ENCODE measurements at regions of chr12 and their contacts with region 1.

Region 1: GRCh38 chr12:48716493-48717251 is at the start of gene CCNT1:
- DNase-seq: peak; percentile 99
- H3K4me3 Mint-ChIP-seq: peak within 1 kb of the TSS; percentile 90
- H3K27ac Mint-ChIP-seq: peak within 1 kb of the TSS; percentile 93
- H3K4me1 Mint-ChIP-seq: peaks cover 43% of the 10 kb centered on the region
- H3K27me3 Mint-ChIP-seq: no peaks in the 10 kb centered on the region
- total RNA-seq, gene CCNT1: 67.2 and 67.7 TPM in 2 replicates

Region 2: DNA sequence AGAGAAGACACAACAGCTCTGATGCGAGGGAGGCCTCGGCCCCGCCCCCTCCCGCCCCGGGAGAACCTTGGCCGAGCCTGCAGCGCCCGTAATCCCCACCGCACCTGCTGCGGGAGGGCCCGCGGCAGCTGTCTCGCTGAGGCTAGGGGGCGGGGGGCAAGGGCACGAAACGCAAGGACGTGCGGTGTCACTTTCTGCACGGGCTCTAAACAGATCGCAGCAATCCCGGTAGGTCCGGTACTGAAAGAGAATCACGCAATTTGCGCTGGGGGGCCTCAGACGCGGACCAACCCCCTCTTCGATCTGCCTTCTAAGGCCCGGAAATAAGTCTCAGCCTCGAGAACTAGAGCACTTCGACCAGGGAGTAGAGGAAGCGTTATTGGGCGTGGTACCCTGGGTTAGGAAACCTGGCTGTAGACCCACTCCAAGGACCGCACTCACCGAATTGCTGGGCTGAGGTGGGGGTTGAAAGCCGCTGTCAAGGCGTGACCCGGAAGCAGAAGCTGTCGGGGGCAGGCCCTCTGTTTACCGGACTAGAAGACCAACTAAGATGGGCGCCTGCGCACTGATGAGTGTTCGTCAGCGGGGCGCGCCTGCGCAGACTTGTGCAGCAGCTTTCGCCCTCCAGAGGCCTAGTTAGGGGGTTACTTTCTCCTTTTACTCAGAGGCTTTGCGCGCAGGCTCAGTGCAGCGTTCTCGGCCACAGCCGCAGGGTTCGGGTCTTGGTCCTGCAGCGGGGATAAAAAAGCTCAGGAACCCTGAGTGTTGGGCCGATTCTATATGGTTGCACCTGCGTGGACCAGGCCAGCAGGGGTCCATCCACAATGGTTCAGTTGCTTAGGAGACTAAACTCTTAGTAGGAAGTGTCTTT is 559.4 kb before region 1 on chr12 and contains the start of gene ASB8:
- intact Hi-C with region 1: loop called (anchors 1 kb)
- DNase-seq: peak; percentile 98
- H3K4me3 Mint-ChIP-seq: peak within 1 kb of the TSS; percentile 94
- H3K27ac Mint-ChIP-seq: peak within 1 kb of the TSS; percentile 86
- H3K4me1 Mint-ChIP-seq: peaks cover 21% of the 10 kb centered on the region
- H3K27me3 Mint-ChIP-seq: no peaks in the 10 kb centered on the region
- total RNA-seq, gene ASB8: 33.3 and 36.1 TPM in 2 replicates

Region 3: DNA sequence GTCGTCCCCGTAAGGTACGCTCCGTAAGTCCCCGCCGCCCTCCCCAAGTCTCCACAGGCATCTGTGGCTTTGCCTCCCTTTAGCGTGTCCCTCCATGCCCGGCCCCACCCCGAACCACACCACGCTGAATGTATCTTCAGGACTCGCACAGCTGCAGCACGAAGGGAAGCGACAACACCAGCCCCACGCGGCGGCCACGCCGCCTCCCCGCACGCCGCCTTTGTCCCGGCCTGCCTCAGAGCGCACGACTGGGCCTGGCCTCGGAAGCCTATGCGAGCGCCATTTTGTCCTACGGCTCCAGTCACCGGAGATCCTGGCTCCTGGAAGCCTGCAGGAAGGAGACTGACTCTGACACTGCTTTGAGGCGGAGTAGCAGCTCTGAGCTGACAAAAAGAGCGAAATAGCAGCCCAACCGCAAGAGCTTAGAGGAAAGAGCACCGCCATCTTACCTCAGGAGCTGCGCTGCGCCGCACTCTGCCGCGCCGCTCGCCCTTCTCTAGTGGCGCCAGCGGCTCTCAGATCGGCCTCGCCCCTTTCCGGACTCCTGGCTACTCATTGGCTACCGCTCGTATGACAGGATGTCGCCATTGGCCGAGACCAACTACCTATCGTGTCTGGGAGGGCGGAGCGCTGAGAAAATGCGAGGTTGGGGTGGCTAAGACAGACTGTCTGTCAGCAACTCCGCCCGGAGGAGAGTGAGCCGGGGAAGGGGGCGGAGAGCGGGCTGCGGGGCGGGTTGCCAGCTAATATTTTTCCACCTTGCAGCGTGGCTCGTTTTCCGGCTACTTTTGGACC is 34.7 kb before region 1 on chr12 and contains the start of gene KANSL2:
- intact Hi-C with region 1: loop called (anchors 1 kb)
- DNase-seq: peak; percentile 97
- H3K4me3 Mint-ChIP-seq: peak within 1 kb of the TSS; percentile 99
- H3K27ac Mint-ChIP-seq: peak within 1 kb of the TSS; percentile 96
- H3K4me1 Mint-ChIP-seq: peaks cover 44% of the 10 kb centered on the region
- H3K27me3 Mint-ChIP-seq: no peaks in the 10 kb centered on the region
- total RNA-seq, gene KANSL2: 65.3 and 66.4 TPM in 2 replicates

Region 4: GRCh38 chr12:48765753-48766162 is 49.1 kb after region 1 on chr12:
- intact Hi-C with region 1: no loop called
- DNase-seq: peak; percentile 10
- H3K4me3 Mint-ChIP-seq: no peak overlapping the region
- H3K27ac Mint-ChIP-seq: no peak overlapping the region
- H3K4me1 Mint-ChIP-seq: peaks cover 16% of the 10 kb centered on the region
- H3K27me3 Mint-ChIP-seq: no peaks in the 10 kb centered on the region

Region 5: GRCh38 chr12:48795480-48796455 is 79.1 kb after region 1 on chr12:
- intact Hi-C with region 1: loop called (anchors 1 kb)
- DNase-seq: peak; percentile 26
- H3K4me3 Mint-ChIP-seq: no peak overlapping the region
- H3K27ac Mint-ChIP-seq: no peak overlapping the region
- H3K4me1 Mint-ChIP-seq: peaks cover 5% of the 10 kb centered on the region
- H3K27me3 Mint-ChIP-seq: peaks cover 10% of the 10 kb centered on the region

Region 6: GRCh38 chr12:48865434-48866290 is 149.0 kb after region 1 on chr12 and contains the start of gene RND1:
- intact Hi-C with region 1: loop called (anchors 1 kb)
- DNase-seq: peak; percentile 84
- H3K4me3 Mint-ChIP-seq: peak within 1 kb of the TSS; percentile 86
- H3K27ac Mint-ChIP-seq: peak within 1 kb of the TSS; percentile 83
- H3K4me1 Mint-ChIP-seq: peaks cover 28% of the 10 kb centered on the region
- H3K27me3 Mint-ChIP-seq: peaks cover 19% of the 10 kb centered on the region
- total RNA-seq, gene RND1: 7.9 and 9.3 TPM in 2 replicates

Region 7: DNA sequence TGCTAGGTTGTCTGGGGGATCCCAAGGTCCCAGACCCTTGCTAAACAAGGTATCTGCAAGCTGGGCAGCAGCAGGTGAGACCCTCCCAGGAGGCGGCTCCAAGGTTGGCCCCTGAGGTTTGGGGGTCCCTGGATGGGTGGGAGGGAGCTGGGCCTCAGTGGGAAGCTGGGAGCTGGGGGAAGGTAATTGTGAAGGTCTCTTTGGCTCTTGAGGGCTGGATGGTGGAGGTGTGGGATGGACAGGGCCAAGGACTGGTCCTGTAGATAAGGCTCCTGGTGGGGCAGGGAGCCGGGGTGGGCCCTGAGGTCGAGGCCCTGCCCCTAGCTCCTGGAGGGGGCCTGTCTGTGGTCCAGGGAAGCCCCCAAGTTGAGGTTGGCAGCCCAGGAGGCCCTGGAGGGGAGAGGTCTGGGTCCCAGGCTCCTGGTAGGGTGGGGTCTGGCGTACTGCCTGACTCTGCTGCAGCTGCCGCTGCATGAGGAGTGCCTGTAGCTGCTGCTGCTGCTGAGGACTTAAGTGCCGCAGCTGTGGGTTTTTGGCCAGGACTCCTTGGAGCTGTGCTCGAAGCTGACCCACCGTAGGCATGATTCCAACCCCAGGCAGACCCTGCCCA is 315.0 kb after region 1 on chr12:
- intact Hi-C with region 1: no loop called
- DNase-seq: no peak
- H3K4me3 Mint-ChIP-seq: no peak overlapping the region
- H3K27ac Mint-ChIP-seq: no peak overlapping the region
- H3K4me1 Mint-ChIP-seq: no peaks in the 10 kb centered on the region
- H3K27me3 Mint-ChIP-seq: no peaks in the 10 kb centered on the region